ENCODE measurements at regions of chr3 and their contacts with region 1.

Region 1: DNA sequence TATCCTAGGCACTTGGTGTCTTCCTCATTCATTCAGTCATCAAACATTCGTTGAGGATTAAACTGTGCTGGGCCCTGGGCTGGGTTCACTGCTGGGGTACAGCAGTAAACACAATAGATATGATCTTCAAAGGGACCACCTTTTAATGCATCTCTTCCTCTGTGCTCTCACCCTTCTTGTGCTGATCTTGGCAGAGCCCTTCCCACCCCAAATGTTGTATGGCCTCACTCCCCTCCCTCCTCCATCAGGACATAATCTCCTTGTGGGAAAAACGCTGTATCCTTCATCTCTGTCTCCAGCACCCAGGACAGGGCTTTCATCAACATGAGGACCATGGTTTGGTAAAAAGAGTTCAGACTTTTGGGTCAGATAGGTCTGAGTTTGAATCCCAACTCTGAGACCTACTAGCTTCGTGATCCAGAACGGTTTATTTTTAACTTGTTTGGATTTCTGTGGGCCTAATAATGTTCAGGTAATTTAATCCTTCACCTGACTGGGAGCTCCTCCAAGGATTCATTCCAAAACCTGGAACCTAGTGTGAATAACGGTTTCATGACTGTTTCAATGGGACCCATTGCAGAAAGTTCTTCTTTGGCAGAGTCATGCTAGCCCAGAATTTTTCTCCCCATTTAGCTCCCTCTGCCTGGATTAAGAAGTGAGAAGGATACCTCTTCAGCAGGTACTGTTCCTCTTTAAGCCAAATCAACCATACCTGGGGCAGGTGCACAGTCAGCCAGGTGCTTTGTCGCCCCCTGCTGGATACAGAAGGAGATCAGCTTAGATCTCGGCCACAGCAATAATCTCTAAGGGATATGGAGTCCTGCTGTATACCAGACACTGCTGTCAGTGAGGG is 5.2 kb upstream of the WNT7A start:
- DNase-seq: peak; percentile 41 to 62 (median 61)
- H3K4me3 ChIP-seq: no peak overlapping the region
- H3K27ac ChIP-seq: no peak overlapping the region
- H3K4me1 ChIP-seq: peaks cover 0 to 15% (median 10%) of the 10 kb centered on the region in 4 experiments
- H3K27me3 ChIP-seq: peaks cover 2 to 41% (median 16%) of the 10 kb centered on the region in 5 experiments

Region 2: GRCh38 chr3:13860006-13860405 is 25.1 kb before region 1 on chr3:
- CTCF ChIA-PET with region 1: interaction called, 10 read pairs
- POLR2A ChIA-PET with region 1: interaction called, 4 read pairs
- DNase-seq: no peak
- H3K4me3 ChIP-seq: no peak overlapping the region
- H3K27ac ChIP-seq: no peak overlapping the region
- H3K4me1 ChIP-seq: peaks cover 0 to 2% (median under 1%) of the 10 kb centered on the region in 4 experiments
- H3K27me3 ChIP-seq: peaks cover 0 to 11% (median 0%) of the 10 kb centered on the region in 5 experiments

Region 3: DNA sequence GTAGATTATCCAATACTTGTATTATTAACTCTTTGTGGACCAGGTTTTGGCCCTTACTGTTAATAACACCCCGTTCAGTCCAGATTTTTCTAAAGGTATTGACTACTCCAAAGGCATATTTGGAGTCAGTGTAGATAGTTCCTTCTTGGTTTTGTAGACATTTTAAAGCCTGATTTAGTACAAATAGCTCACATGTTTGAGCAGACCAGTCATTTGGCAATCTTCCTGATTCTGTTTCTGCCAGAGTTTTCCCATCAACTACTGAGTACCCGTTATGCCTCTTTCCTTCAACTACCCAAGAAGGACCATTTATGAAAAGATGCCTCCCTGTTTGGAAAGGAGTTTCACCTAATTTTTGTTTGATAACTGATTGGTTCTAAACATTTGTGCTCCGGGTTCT is 157.6 kb after region 1 on chr3:
- CTCF ChIA-PET with region 1: no interaction called
- POLR2A ChIA-PET with region 1: no interaction called
- DNase-seq: no peak
- H3K4me3 ChIP-seq: no peak overlapping the region
- H3K27ac ChIP-seq: no peak overlapping the region
- H3K4me1 ChIP-seq: no peaks in the 10 kb centered on the region
- H3K27me3 ChIP-seq: peaks cover 0 to 6% (median 4%) of the 10 kb centered on the region in 5 experiments